Dorsolateral prefrontal cortex (tissue), 120 donors: ENCODE measurements at regions of chr2 and their contacts with region 1.

Region 1: DNA sequence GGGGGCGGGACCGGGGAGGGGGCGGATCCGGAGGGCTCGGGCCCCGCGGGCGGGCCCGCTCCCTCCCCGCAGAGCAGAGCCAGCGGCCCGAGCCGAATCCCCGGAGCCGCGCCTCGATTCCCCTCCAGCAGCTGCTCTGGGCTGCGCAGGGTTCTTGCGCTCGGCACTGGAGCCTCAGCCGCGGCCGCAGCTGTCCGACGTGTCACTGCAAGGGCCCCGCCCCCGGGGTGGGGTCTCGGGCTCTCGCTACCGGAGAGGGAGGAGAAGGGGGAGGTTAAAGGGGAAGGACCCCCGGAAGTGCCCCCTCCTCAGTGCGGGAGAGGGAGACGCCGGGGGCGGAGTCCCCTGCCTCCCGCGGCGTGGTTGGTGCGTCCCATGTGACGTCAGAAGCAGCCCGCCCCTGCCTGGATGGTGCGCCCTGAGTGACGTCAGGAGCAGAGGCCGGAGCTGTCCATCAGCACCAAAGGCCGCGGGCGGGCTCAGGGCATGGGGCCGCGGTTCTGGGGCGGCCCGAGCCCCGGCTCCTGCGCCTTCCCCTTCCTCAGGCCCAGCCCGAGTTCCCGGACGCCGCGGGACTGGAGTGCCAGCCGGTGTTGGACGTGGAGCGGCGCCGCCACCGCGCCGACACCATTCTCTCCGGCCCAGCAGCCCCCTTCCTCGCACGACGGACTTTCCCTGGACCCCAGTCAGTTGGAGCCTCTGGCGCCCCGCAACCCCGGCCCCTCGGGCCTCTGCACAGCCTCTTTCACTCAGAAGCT is at the starts of genes CHPF and TMEM198:
- DNase-seq: peak; percentile 97 to 100 (median 99)
- H3K4me3 ChIP-seq: peak within 1 kb of the TSS; percentile 55 to 95 (median 83)
- H3K27ac ChIP-seq: peak within 1 kb of the TSS; percentile 7 to 95 (median 88)
- H3K27me3 ChIP-seq: no peaks in the 10 kb centered on the region
- CTCF ChIP-seq: peak in 29 of 56 donors; percentile 8 to 56 (median 27)
- total RNA-seq, gene CHPF: 28.8 to 59.4 (median 41.7) TPM
- total RNA-seq, gene TMEM198: 8.5 to 24.9 (median 16.0) TPM

Region 2: DNA sequence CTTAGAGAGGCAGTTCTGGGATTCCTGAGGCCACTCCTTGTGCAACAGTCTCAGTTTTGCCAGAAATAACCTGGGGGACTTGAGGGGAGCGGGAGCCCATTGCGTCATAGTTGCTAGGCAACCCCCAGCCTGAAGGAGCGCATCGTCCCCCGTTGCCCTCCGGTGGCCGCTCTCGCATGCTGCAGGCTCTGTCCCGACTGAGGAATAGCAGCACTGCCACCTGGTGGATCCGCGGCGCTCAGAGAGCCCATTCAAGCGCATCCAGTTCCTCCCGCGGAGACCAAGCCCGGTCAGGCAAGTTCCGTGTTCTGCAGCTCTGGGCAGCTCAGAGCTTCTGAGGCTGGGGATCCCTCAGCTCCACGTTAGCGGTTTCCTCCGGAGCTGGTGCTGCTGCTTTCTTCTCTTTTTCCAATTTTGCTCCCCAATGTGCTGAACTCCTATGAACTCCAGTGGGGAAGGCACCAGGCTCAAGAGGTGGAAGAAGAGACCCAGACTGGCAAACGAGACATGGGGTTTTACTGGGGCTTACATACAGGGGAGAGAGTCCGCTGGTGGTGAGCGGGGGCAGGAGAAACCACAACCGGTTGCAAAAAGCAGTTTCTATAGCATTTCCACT is 98.8 kb after region 1 on chr2:
- intact Hi-C with region 1: loop called (anchors 2 kb)
- DNase-seq: peak; percentile 89 to 98 (median 96)
- H3K4me3 ChIP-seq: peak overlapping the region in 6 of 59 donors; percentile 9 to 25 (median 12)
- H3K27ac ChIP-seq: peak overlapping the region in 15 of 59 donors; percentile 5 to 63 (median 38)
- H3K27me3 ChIP-seq: peaks cover 0 to under 1% (median 0%) of the 10 kb centered on the region in 45 donors
- CTCF ChIP-seq: peak; percentile 77 to 99 (median 97)

Region 3: GRCh38 chr2:219689676-219690628 is 146.2 kb after region 1 on chr2:
- intact Hi-C with region 1: loop called in 1 of 2 experiments (anchors 5 kb)
- DNase-seq: peak in 4 of 10 donors; percentile 11 to 53 (median 40)
- H3K4me3 ChIP-seq: no peak overlapping the region
- H3K27ac ChIP-seq: no peak overlapping the region
- H3K27me3 ChIP-seq: peaks cover 0 to 24% (median 4%) of the 10 kb centered on the region in 45 donors
- CTCF ChIP-seq: peak; percentile 63 to 98 (median 82)